Naive thymus-derived CD4-positive, alpha-beta T cell (primary cell): ENCODE measurements at regions of chr6 and their contacts with region 1.

Region 1: GRCh38 chr6:56955171-56956045 is 501 bp downstream of the BEND6 start:
- DNase-seq: peak in 7 of 9 donors; percentile 8 to 81 (median 19)
- ATAC-seq: peak; percentile 74
- H3K4me3 ChIP-seq: peak overlapping the region; percentile 37
- H3K4me3 Mint-ChIP-seq: peak overlapping the region; percentile 76 to 88 (median 80)
- H3K27ac ChIP-seq: no peak overlapping the region
- H3K27ac Mint-ChIP-seq: peak overlapping the region in 1 of 9 donors; percentile 30
- H3K4me1 ChIP-seq: peaks cover 6 to 16% of the 10 kb centered on the region in 2 donors
- H3K4me1 Mint-ChIP-seq: peaks cover 11 to 26% (median 24%) of the 10 kb centered on the region in 7 donors
- H3K27me3 ChIP-seq: peaks cover 0 to 12% of the 10 kb centered on the region in 2 donors
- H3K27me3 Mint-ChIP-seq: peaks cover 52 to 77% (median 69%) of the 10 kb centered on the region in 5 donors

Region 2: GRCh38 chr6:56542364-56543331 is 412.8 kb before region 1 on chr6:
- CTCF ChIA-PET with region 1: no interaction called
- POLR2A ChIA-PET with region 1: no interaction called
- intact Hi-C with region 1: loop called in 1 of 2 experiments (anchors 10 kb)
- DNase-seq: peak; percentile 32 to 74 (median 59)
- ATAC-seq: peak; percentile 90
- H3K4me3 ChIP-seq: peak overlapping the region; percentile 69
- H3K4me3 Mint-ChIP-seq: no peak overlapping the region
- H3K27ac ChIP-seq: peak overlapping the region; percentile 38
- H3K27ac Mint-ChIP-seq: no peak overlapping the region
- H3K4me1 ChIP-seq: peaks cover 0 to 8% of the 10 kb centered on the region in 2 donors
- H3K4me1 Mint-ChIP-seq: peaks cover 0 to 2% (median 0%) of the 10 kb centered on the region in 7 donors
- H3K27me3 ChIP-seq: no peaks in the 10 kb centered on the region
- H3K27me3 Mint-ChIP-seq: peaks cover 0 to 3% (median 0%) of the 10 kb centered on the region in 5 donors

Region 3: GRCh38 chr6:57021086-57021720 is 65.8 kb after region 1 on chr6:
- CTCF ChIA-PET with region 1: no interaction called
- POLR2A ChIA-PET with region 1: no interaction called
- intact Hi-C with region 1: loop called in 1 of 2 experiments (anchors 5 kb)
- DNase-seq: peak in 5 of 9 donors; percentile 7 to 35 (median 15)
- ATAC-seq: peak; percentile 76
- H3K4me3 ChIP-seq: no peak overlapping the region
- H3K4me3 Mint-ChIP-seq: no peak overlapping the region
- H3K27ac ChIP-seq: no peak overlapping the region
- H3K27ac Mint-ChIP-seq: no peak overlapping the region
- H3K4me1 ChIP-seq: no peaks in the 10 kb centered on the region
- H3K4me1 Mint-ChIP-seq: no peaks in the 10 kb centered on the region
- H3K27me3 ChIP-seq: no peaks in the 10 kb centered on the region
- H3K27me3 Mint-ChIP-seq: peaks cover 4 to 30% (median 11%) of the 10 kb centered on the region in 5 donors

Region 4: GRCh38 chr6:57089687-57090460 is 134.5 kb after region 1 on chr6 and contains the start of gene ZNF451:
- CTCF ChIA-PET with region 1: no interaction called
- POLR2A ChIA-PET with region 1: no interaction called
- intact Hi-C with region 1: loop called in 1 of 2 experiments (anchors 1 kb)
- DNase-seq: peak; percentile 88 to 97 (median 94)
- ATAC-seq: peak; percentile 96
- H3K4me3 ChIP-seq: peak within 1 kb of the TSS; percentile 64
- H3K4me3 Mint-ChIP-seq: peak within 1 kb of the TSS; percentile 85 to 94 (median 90)
- H3K27ac ChIP-seq: peak within 1 kb of the TSS; percentile 78
- H3K27ac Mint-ChIP-seq: peak within 1 kb of the TSS; percentile 79 to 94 (median 90)
- H3K4me1 ChIP-seq: peaks cover 24% of the 10 kb centered on the region in 2 donors
- H3K4me1 Mint-ChIP-seq: peaks cover 22 to 44% (median 34%) of the 10 kb centered on the region in 7 donors
- H3K27me3 ChIP-seq: no peaks in the 10 kb centered on the region
- H3K27me3 Mint-ChIP-seq: no peaks in the 10 kb centered on the region
- total RNA-seq, gene ZNF451: 63.4 to 116 (median 96.6) TPM

Region 5: GRCh38 chr6:57221936-57222742 is 266.7 kb after region 1 on chr6 and contains the start of gene RAB23:
- CTCF ChIA-PET with region 1: no interaction called
- POLR2A ChIA-PET with region 1: no interaction called
- intact Hi-C with region 1: loop called in 1 of 2 experiments (anchors 5 kb)
- DNase-seq: peak; percentile 70 to 94 (median 87)
- ATAC-seq: peak; percentile 92
- H3K4me3 ChIP-seq: peak within 1 kb of the TSS; percentile 86
- H3K4me3 Mint-ChIP-seq: peak within 1 kb of the TSS; percentile 89 to 100 (median 98)
- H3K27ac ChIP-seq: peak within 1 kb of the TSS; percentile 68
- H3K27ac Mint-ChIP-seq: peak within 1 kb of the TSS; percentile 85 to 95 (median 91)
- H3K4me1 ChIP-seq: no peaks in the 10 kb centered on the region
- H3K4me1 Mint-ChIP-seq: peaks cover 0 to 24% (median 10%) of the 10 kb centered on the region in 7 donors
- H3K27me3 ChIP-seq: no peaks in the 10 kb centered on the region
- H3K27me3 Mint-ChIP-seq: peaks cover 6 to 43% (median 13%) of the 10 kb centered on the region in 5 donors
- total RNA-seq, gene RAB23: 0.50 to 3.2 (median 2.0) TPM